Activated B cell treated with CpG ODN at 0.5 μM for 24 hours (primary cell): ENCODE measurements at regions of chr20 and their contacts with region 1.

Region 1: GRCh38 chr20:16885746-16886145 is 137.6 kb downstream of the OTOR start:
- DNase-seq: no peak
- ATAC-seq: no peak
- H3K4me3 Mint-ChIP-seq: no peak overlapping the region
- H3K27ac Mint-ChIP-seq: no peak overlapping the region
- H3K4me1 Mint-ChIP-seq: no peaks in the 10 kb centered on the region
- H3K27me3 Mint-ChIP-seq: no peaks in the 10 kb centered on the region
- CTCF ChIP-seq: no peak

Region 2: DNA sequence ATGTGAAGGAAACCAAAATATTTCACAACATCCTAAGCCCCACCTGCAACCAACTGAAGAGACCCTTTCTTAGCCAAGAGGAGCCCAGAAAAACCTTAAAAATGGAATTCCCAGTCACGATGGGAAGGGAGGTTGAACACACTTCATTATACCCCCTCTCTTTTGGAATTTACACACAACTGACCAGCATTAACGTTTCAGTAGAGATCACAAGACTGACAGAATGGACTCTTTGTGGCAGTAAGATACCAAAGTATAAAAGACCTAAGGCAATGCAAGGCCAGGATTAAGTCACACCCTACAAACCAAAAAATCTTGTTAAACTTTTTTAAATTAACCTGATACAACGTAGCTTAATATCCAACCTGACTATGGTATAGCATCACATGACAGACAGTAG is 53.3 kb after region 1 on chr20:
- CTCF ChIA-PET with region 1: no interaction called
- POLR2A ChIA-PET with region 1: no interaction called
- intact Hi-C with region 1: loop called (anchors 5 kb)
- DNase-seq: no peak
- ATAC-seq: no peak
- H3K4me3 Mint-ChIP-seq: no peak overlapping the region
- H3K27ac Mint-ChIP-seq: no peak overlapping the region
- H3K4me1 Mint-ChIP-seq: no peaks in the 10 kb centered on the region
- H3K27me3 Mint-ChIP-seq: no peaks in the 10 kb centered on the region
- CTCF ChIP-seq: no peak